IMR-90 (cell line): ENCODE measurements at regions of chr2 and their contacts with region 1.

Region 1: DNA sequence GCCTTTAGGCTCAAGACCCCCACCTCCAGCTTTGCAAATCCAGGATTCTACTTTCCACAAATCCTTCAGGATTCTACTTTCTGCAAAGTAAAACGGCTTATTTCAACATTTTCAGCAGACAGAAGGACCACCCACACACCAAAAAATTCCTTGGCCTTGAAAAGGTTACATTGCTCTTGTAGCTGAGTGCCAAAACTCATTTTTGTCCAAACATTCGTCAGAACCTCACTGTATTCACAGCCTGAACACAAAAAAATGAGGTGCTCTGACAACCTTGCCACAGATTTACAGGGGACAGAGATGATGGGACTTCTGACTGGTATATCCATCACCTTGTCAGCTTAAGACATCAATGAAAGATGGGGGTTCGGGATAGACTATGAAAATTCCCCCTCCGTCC is 63.0 kb upstream of the COX7A2L start:
- DNase-seq: peak; percentile 78
- ATAC-seq: peak; percentile 30
- H3K4me3 ChIP-seq: no peak overlapping the region
- H3K27ac ChIP-seq: no peak overlapping the region
- H3K4me1 ChIP-seq: peaks cover 11% of the 10 kb centered on the region
- H3K27me3 ChIP-seq: no peaks in the 10 kb centered on the region
- CTCF ChIP-seq: no peak
- POLR2A ChIP-seq: no peak
- RAD21 ChIP-seq: no peak

Region 2: DNA sequence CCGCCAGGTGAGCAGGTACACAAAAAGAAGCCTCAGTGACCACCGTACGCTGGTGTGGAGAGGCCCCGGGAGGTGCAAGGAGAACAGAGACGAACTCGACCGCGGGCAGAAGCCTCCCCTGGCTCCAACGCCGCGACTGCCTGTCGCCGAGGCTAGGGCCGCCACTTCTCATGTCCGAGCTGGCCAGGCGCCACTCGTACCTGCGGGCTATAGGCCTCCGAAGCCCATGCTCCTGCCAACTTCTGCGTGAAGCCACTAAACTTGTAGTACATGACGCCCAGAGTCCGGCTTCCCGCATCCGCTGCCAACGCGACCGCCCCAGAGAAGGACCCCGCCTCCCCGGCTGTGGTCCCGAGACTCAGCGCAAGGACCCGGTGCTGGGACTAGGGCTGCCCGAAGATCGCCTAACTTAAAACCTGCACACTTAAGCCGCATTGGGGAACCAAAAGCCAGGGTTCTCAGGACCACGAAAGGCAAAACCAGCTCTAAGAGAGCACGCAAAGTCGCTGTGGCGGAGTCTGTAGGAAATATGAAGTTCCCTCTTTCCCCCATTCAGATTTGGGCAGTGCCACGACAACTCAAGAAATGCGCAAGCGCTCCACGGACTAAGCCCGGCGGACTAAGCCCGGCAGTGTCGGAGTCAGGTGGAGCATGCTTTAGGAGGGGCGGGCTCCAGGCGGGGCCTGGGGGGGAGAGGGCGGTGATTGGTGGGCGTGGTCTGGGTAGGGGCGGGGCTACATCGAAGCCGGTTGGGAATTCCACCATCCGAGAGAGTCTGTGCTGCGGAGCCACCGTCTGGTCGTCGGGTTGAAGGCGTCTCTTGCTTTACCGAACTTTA is 62.9 kb before region 1 on chr2 and contains the start of gene COX7A2L:
- CTCF ChIA-PET with region 1: no interaction called
- POLR2A ChIA-PET with region 1: no interaction called
- dilution Hi-C with region 1: no loop called
- in situ Hi-C with region 1: no loop called
- intact Hi-C with region 1: loop called (anchors 5 kb)
- DNase-seq: peak; percentile 97
- ATAC-seq: peak; percentile 99
- H3K4me3 ChIP-seq: peak within 1 kb of the TSS; percentile 86
- H3K27ac ChIP-seq: peak within 1 kb of the TSS; percentile 94
- H3K4me1 ChIP-seq: peaks cover 4% of the 10 kb centered on the region
- H3K27me3 ChIP-seq: peaks cover 4% of the 10 kb centered on the region
- CTCF ChIP-seq: peak; percentile 46
- POLR2A ChIP-seq: peak; percentile 92
- RAD21 ChIP-seq: peak; percentile 52
- total RNA-seq, gene COX7A2L: 123 and 192 TPM in 2 replicates

Region 3: GRCh38 chr2:42503291-42503690 is 79.3 kb after region 1 on chr2:
- CTCF ChIA-PET with region 1: no interaction called
- POLR2A ChIA-PET with region 1: no interaction called
- dilution Hi-C with region 1: no loop called
- in situ Hi-C with region 1: no loop called
- intact Hi-C with region 1: no loop called
- DNase-seq: no peak
- ATAC-seq: no peak
- H3K4me3 ChIP-seq: no peak overlapping the region
- H3K27ac ChIP-seq: no peak overlapping the region
- H3K4me1 ChIP-seq: no peaks in the 10 kb centered on the region
- H3K27me3 ChIP-seq: peaks cover 3% of the 10 kb centered on the region
- CTCF ChIP-seq: no peak
- POLR2A ChIP-seq: no peak
- RAD21 ChIP-seq: no peak